Activated CD4-positive, alpha-beta T cell treated with anti-CD3 and anti-CD28 coated beads, Interleukin-2, amount 10 ng/mL, durations not matched to agents 24 days and 14 days (primary cell): ENCODE measurements at regions of chr1 and their contacts with region 1.

Region 1: GRCh38 chr1:225896937-225897549 is 8.1 kb upstream of the LEFTY1 start:
- DNase-seq: peak; percentile 95
- H3K4me3 Mint-ChIP-seq: peak overlapping the region; percentile 75
- H3K27ac Mint-ChIP-seq: peak overlapping the region; percentile 84
- H3K4me1 Mint-ChIP-seq: peaks cover 39% of the 10 kb centered on the region
- H3K27me3 Mint-ChIP-seq: peaks cover 17% of the 10 kb centered on the region

Region 2: DNA sequence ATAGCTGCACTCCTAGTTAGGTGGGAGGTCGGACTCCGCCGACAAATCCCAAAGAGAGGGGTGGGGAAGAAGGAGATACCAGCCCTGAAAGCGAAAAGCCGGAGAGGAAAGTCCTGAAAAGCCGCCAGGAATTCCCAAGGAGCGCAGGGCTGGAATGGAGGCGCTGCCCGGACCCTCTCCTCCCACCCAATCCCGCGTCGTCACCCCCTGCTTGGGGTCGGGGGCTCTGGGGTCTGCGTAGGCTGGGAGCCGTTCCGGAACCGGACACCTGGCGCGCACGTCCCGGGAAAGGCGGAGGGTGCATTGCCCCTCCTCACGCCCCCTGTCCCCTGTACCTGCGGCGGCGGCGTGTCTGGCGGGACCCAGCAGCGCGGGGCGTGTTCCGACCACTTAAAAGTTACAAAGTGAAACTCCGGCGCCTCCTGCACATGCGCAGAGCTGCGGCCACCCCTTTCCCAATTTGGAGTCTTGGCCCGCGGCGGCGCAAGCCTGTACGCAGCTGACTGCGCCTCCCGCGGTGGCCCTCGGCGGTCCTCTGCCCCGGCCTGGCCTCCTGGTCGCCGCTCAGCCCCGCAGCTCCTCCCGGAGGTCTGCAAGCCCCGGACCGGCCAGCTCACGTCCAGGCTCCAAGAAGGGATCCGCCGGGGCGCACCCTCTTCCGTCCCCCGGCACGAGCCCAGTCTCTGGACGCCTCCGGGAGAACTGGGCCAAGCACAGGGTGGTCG is 14.9 kb before region 1 on chr1 and contains the start of gene TMEM63A:
- intact Hi-C with region 1: loop called (anchors 1 kb)
- DNase-seq: peak; percentile 97
- H3K4me3 Mint-ChIP-seq: peak within 1 kb of the TSS; percentile 85
- H3K27ac Mint-ChIP-seq: peak within 1 kb of the TSS; percentile 87
- H3K4me1 Mint-ChIP-seq: peaks cover 43% of the 10 kb centered on the region
- H3K27me3 Mint-ChIP-seq: peaks cover 14% of the 10 kb centered on the region
- total RNA-seq, gene TMEM63A: 23.0 and 28.5 TPM in 2 replicates

Region 3: DNA sequence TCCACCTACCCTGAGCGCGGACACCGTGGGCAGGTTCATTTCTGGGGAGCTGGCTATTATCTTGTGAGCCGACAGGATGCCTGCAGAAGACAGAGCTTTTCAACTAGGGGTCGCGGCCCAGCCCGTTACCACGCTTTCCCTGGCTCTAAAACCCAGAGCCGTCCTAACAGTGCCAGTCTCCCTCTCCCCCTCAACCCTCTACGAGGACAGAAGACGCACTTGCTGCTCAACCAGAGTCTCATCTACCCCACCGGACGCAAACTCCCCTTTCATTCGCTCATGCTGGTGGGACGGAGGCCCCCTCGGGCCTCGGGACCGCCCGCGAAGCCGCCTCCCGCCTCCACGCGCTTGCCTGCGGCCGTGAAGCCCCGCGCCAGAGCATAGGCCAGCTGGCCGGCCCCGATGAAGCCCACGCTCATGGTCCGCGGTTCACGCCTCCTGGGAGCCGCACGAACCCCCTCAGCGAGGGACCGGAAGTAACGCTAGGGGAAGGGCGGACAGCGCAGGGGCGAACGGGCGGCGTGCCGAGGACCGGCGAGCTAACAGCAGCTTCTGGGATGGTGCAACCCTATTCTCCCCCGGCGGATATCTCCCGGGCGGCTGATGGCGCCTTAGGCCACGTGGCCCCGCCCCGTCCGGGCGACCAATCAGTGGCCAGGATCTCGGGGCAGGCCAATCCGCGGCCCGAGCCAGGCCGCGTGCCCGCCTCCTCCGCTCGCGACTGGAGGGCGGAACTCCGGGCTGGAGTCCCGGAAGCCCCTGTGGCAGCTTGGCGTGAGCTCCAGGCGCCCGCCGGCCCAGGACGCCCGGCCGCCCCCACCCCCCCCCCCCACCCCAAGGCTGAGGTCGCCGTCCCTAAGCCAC is 26.9 kb after region 1 on chr1 and contains the start of gene PYCR2:
- intact Hi-C with region 1: loop called (anchors 1 kb)
- DNase-seq: peak; percentile 99
- H3K4me3 Mint-ChIP-seq: peak within 1 kb of the TSS; percentile 97
- H3K27ac Mint-ChIP-seq: peak within 1 kb of the TSS; percentile 95
- H3K4me1 Mint-ChIP-seq: peaks cover 39% of the 10 kb centered on the region
- H3K27me3 Mint-ChIP-seq: no peaks in the 10 kb centered on the region
- total RNA-seq, gene PYCR2: 144 and 150 TPM in 2 replicates

Region 4: GRCh38 chr1:226019572-226019971 is 122.5 kb after region 1 on chr1:
- intact Hi-C with region 1: no loop called
- DNase-seq: no peak
- H3K4me3 Mint-ChIP-seq: no peak overlapping the region
- H3K27ac Mint-ChIP-seq: no peak overlapping the region
- H3K4me1 Mint-ChIP-seq: no peaks in the 10 kb centered on the region
- H3K27me3 Mint-ChIP-seq: peaks cover 6% of the 10 kb centered on the region

Region 5: GRCh38 chr1:226255380-226255779 is 358.3 kb after region 1 on chr1:
- intact Hi-C with region 1: no loop called
- DNase-seq: no peak
- H3K4me3 Mint-ChIP-seq: no peak overlapping the region
- H3K27ac Mint-ChIP-seq: no peak overlapping the region
- H3K4me1 Mint-ChIP-seq: no peaks in the 10 kb centered on the region
- H3K27me3 Mint-ChIP-seq: no peaks in the 10 kb centered on the region

Region 6: DNA sequence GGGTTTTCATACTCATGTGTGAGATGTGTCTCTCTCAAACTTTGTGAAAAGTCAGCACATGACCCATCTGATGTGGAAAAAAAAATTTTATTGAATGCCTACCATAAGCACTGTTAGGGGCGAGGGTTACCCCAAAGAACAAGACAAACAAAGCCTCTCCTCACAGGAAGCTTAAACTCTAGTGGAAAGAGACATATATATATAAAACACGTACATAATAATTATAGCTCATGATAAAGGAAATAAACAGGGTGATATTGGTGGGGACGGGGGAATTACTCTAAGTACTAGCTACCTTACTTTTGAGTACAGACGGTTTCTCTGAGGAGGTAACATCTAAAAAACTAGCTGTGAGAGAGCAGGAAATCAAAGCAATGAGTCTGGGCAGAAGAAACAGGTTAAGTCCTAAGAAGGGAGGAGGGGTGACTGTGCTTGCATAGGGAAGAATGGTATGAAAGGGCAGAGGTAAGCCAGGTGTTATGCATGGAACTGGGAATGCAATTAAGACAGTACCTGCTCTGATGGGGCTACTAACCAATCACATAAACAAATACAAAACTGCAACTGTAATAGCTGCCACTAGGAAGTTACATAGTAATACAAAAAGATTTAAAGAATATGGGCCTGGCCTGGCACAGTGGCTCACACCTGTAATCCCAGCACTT is 407.4 kb after region 1 on chr1:
- intact Hi-C with region 1: no loop called
- DNase-seq: peak; percentile 42
- H3K4me3 Mint-ChIP-seq: no peak overlapping the region
- H3K27ac Mint-ChIP-seq: no peak overlapping the region
- H3K4me1 Mint-ChIP-seq: peaks cover 32% of the 10 kb centered on the region
- H3K27me3 Mint-ChIP-seq: no peaks in the 10 kb centered on the region

Region 7: DNA sequence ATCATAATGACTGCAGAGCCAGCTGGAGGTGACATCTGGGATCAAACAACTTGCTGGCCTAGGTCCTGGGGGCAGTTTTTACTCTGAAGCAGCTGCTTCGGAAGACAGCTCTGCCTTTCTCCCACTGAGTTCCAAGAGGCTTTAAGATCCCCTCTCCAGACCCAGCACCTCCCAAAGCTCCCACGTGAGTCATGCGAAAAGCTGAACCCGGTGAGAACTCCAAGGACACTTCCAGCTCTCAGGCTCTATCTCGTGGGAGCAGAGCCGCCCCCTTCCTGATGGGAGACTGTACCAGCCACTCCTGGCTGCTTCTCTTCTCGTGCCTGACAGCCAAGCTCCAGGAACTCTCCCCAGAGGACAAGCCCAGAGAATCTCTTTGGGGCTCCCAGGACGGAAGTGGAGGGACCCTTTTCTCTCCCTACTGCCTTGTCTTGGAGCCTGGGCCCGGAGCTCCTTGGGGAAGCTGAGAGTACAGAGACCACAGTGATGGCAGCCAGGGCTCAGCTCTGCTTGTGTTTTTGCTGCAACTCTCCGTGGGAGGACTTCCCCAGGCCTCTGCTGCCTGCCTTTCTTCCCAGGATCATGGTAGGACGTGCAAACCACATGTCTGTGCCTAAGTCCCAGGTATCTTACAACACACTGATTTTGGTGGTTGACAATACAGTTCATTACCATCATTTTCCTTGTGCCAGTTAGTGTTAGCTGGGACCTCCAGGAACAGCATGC is 692.1 kb after region 1 on chr1:
- intact Hi-C with region 1: no loop called
- DNase-seq: no peak
- H3K4me3 Mint-ChIP-seq: no peak overlapping the region
- H3K27ac Mint-ChIP-seq: no peak overlapping the region
- H3K4me1 Mint-ChIP-seq: no peaks in the 10 kb centered on the region
- H3K27me3 Mint-ChIP-seq: peaks cover 4% of the 10 kb centered on the region